CD8-positive, alpha-beta memory T cell (primary cell): ENCODE measurements at regions of chr19 and their contacts with region 1.

Region 1: DNA sequence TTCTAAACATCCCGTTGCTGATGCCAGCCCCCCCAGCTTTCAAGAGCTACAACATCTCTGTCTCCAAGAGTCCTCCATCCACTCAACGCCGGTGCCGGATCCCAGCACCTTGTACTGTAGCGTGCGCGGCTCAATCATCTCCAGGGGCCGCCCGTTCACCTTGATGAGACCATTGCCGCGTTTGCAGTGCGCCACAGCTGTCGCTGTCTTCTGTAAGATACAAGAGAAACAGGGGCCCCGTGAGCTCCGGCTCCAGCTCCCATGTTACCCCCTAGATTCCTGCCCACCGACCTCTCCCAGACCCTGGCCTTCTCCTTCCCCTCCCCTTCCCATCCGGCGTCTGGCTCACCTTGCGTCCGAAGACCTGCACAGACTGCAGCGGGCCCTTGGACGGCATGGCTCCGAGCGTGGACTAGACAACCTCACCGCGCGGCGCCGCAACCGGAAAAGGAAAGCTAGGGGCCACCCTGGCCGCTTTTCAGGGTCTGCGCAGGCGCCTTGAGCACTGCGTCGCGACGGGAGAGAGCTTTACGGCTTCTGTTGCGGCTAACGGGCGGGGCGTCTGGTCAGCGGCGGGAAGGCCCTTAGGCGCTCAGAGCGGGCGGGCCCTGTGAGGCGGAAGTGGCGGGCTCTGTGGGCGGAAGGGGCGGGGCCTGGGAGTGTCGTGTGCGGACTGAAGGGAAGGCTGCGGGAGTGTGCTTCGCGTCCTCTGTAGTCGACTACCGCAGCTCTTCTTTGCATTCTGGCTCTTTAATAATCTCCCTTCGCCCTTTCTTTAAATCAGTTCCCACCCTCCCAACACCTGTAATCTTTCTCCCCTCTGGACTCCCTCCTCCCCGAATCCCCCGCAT is at the start of gene RPS16:
- DNase-seq: peak; percentile 98 to 100 (median 98)
- H3K4me3 ChIP-seq: peak within 1 kb of the TSS; percentile 91
- H3K4me3 Mint-ChIP-seq: peak within 1 kb of the TSS; percentile 97 to 100 (median 99)
- H3K27ac ChIP-seq: peak within 1 kb of the TSS; percentile 96
- H3K27ac Mint-ChIP-seq: peak within 1 kb of the TSS; percentile 96 to 100 (median 99)
- H3K4me1 ChIP-seq: peaks cover 28% of the 10 kb centered on the region
- H3K4me1 Mint-ChIP-seq: peaks cover 38 to 58% (median 39%) of the 10 kb centered on the region in 3 donors
- H3K27me3 ChIP-seq: no peaks in the 10 kb centered on the region
- H3K27me3 Mint-ChIP-seq: peaks cover 0 to 10% of the 10 kb centered on the region in 2 donors
- total RNA-seq, gene RPS16: 2,654 to 2,668 TPM

Region 2: DNA sequence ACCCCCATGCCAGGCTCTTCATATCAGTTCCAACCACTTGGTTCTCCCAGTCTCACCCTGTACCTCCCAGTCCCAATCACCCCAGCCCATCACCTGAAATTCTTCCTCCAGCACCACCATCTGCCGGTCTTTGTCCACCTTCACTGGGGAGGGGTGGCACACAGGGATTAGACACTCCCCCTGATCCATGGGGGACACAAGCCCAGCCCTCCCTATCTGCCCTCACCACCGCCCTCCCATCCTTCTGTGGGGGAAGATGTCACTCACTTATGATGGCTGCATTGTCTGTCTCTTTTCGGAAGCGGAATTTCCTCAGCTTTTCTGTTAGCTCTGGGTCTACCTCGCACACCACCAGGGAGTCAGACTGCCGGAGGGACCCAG is 100.6 kb before region 1 on chr19:
- CTCF ChIA-PET with region 1: no interaction called
- POLR2A ChIA-PET with region 1: interaction called, 10 read pairs
- DNase-seq: peak in 1 of 5 donors; percentile 24
- H3K4me3 ChIP-seq: peak overlapping the region; percentile 99
- H3K4me3 Mint-ChIP-seq: peak overlapping the region; percentile 97 to 100 (median 99)
- H3K27ac ChIP-seq: peak overlapping the region; percentile 92
- H3K27ac Mint-ChIP-seq: peak overlapping the region; percentile 91 to 100 (median 97)
- H3K4me1 ChIP-seq: peaks cover 59% of the 10 kb centered on the region
- H3K4me1 Mint-ChIP-seq: peaks cover 42 to 75% (median 66%) of the 10 kb centered on the region in 3 donors
- H3K27me3 ChIP-seq: no peaks in the 10 kb centered on the region
- H3K27me3 Mint-ChIP-seq: no peaks in the 10 kb centered on the region

Region 3: GRCh38 chr19:39390755-39391592 is 44.8 kb before region 1 on chr19 and contains the starts of genes MED29 and PAF1:
- CTCF ChIA-PET with region 1: interaction called, 12 read pairs
- POLR2A ChIA-PET with region 1: interaction called, 34 read pairs
- DNase-seq: peak; percentile 92 to 99 (median 98)
- H3K4me3 ChIP-seq: peak within 1 kb of the TSS; percentile 96
- H3K4me3 Mint-ChIP-seq: peak within 1 kb of the TSS; percentile 88 to 96 (median 95)
- H3K27ac ChIP-seq: peak within 1 kb of the TSS; percentile 99
- H3K27ac Mint-ChIP-seq: peak within 1 kb of the TSS; percentile 95 to 100 (median 99)
- H3K4me1 ChIP-seq: peaks cover 20% of the 10 kb centered on the region
- H3K4me1 Mint-ChIP-seq: peaks cover 34 to 48% (median 42%) of the 10 kb centered on the region in 3 donors
- H3K27me3 ChIP-seq: no peaks in the 10 kb centered on the region
- H3K27me3 Mint-ChIP-seq: peaks cover 0 to 2% of the 10 kb centered on the region in 2 donors
- total RNA-seq, gene MED29: 39.3 to 39.6 TPM
- total RNA-seq, gene PAF1: 44.6 to 46.9 TPM

Region 4: GRCh38 chr19:39406656-39407393 is 28.9 kb before region 1 on chr19 and contains the start of gene ZFP36:
- CTCF ChIA-PET with region 1: interaction called, 25 read pairs
- POLR2A ChIA-PET with region 1: interaction called, 19 read pairs
- DNase-seq: peak; percentile 86 to 94 (median 87)
- H3K4me3 ChIP-seq: peak within 1 kb of the TSS; percentile 83
- H3K4me3 Mint-ChIP-seq: peak within 1 kb of the TSS; percentile 89 to 96 (median 92)
- H3K27ac ChIP-seq: peak within 1 kb of the TSS; percentile 97
- H3K27ac Mint-ChIP-seq: peak within 1 kb of the TSS; percentile 96 to 100 (median 100)
- H3K4me1 ChIP-seq: peaks cover 60% of the 10 kb centered on the region
- H3K4me1 Mint-ChIP-seq: peaks cover 50 to 67% (median 59%) of the 10 kb centered on the region in 3 donors
- H3K27me3 ChIP-seq: no peaks in the 10 kb centered on the region
- H3K27me3 Mint-ChIP-seq: peaks cover 0 to 36% of the 10 kb centered on the region in 2 donors
- total RNA-seq, gene ZFP36: 32.8 to 36.4 TPM

Region 5: GRCh38 chr19:39532233-39533002 is 96.7 kb after region 1 on chr19 and contains the start of gene EID2B:
- CTCF ChIA-PET with region 1: interaction called, 18 read pairs
- POLR2A ChIA-PET with region 1: interaction called, 9 read pairs
- DNase-seq: peak; percentile 91 to 97 (median 93)
- H3K4me3 ChIP-seq: peak within 1 kb of the TSS; percentile 95
- H3K4me3 Mint-ChIP-seq: peak within 1 kb of the TSS; percentile 89 to 100 (median 93)
- H3K27ac ChIP-seq: peak within 1 kb of the TSS; percentile 73
- H3K27ac Mint-ChIP-seq: peak within 1 kb of the TSS; percentile 79 to 96 (median 92)
- H3K4me1 ChIP-seq: peaks cover 14% of the 10 kb centered on the region
- H3K4me1 Mint-ChIP-seq: peaks cover 25 to 44% (median 39%) of the 10 kb centered on the region in 3 donors
- H3K27me3 ChIP-seq: no peaks in the 10 kb centered on the region
- H3K27me3 Mint-ChIP-seq: peaks cover 0 to 2% of the 10 kb centered on the region in 2 donors
- total RNA-seq, gene EID2B: 3.4 to 3.7 TPM